AG04449 (cell line): ENCODE measurements at regions of chr11 and their contacts with region 1.

Region 1: DNA sequence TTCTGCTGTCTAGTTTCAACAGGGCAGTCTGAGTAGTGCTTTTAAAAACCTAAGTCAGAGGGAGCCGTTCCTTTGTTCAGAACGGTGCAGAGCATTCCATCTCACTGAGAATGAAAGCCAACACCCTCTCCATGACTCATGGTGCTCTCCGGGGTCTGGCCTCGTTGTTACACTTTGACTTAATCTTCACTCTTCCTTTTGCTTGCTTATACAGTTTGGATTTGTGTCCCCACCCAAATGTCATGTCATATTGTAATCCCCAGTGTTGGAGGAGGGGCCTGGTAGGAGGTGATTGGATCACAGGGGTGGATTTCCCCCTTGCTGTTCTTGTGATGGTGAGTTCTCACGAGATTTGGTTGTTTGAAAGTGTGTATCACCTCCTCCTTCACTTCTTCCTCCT is 292.2 kb downstream of the ST3GAL4 start:
- DNase-seq: peak; percentile 44
- H3K4me3 ChIP-seq: peak overlapping the region; percentile 23; the same call in 1 of the 2 replicates
- CTCF ChIP-seq: no peak

Region 2: GRCh38 chr11:126636911-126637794 is 10.6 kb before region 1 on chr11:
- CTCF ChIA-PET with region 1: interaction called, 3 read pairs
- POLR2A ChIA-PET with region 1: interaction called, 16 read pairs
- DNase-seq: peak; percentile 69
- H3K4me3 ChIP-seq: no peak overlapping the region
- CTCF ChIP-seq: no peak